Naive thymus-derived CD8-positive, alpha-beta T cell (primary cell): ENCODE measurements at regions of chr11 and their contacts with region 1.

Region 1: DNA sequence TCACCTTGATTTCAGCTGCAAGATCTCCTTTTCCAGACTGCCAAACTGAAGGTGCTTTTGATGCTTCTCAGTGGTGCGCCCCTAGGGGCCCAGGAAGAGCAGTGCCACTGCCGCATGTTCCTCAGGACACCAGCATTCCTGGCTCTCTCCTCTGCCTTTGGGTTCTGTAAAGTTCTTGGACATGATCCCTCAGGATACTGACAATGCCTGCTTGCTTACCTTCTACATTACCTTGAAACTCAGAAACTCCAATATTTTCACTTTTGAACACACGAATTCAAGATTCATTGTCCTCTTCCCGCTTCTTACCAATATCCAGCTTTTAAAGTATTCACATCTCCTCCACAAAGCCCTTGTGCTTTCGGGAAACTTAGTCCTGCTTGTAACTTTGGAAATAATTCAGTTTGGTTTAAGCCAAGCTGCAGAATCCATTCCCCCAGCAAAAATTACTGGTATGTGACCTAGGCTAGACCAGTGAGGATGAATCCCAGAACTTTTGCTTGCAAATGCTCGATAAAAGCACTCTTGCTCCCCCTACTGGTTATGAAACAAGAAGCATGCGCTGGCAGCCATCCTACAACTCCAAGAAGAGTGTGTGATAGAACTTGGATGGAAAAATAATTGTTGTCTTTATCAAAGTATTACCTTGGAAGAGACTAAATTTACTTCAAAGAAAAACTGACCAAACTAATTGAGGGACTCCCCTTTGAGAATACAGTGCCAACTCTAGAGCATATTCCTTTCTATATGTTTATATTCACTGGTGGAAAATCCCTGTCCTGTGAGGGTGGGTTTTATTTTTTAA is 16.5 kb upstream of the OR5B21 start:
- DNase-seq: peak in 9 of 10 donors; percentile 26 to 76 (median 66)
- ATAC-seq: peak; percentile 58 to 67
- H3K4me3 Mint-ChIP-seq: peak overlapping the region; percentile 49 to 86 (median 77)
- H3K27ac Mint-ChIP-seq: peak overlapping the region; percentile 91 to 98 (median 96)
- H3K4me1 Mint-ChIP-seq: peaks cover 33 to 80% (median 70%) of the 10 kb centered on the region in 4 donors
- H3K27me3 Mint-ChIP-seq: no peaks in the 10 kb centered on the region

Region 2: GRCh38 chr11:58276151-58276550 is 248.3 kb before region 1 on chr11:
- POLR2A ChIA-PET with region 1: no interaction called
- DNase-seq: no peak
- ATAC-seq: no peak
- H3K4me3 Mint-ChIP-seq: no peak overlapping the region
- H3K27ac Mint-ChIP-seq: no peak overlapping the region
- H3K4me1 Mint-ChIP-seq: no peaks in the 10 kb centered on the region
- H3K27me3 Mint-ChIP-seq: peaks cover 7 to 25% (median 13%) of the 10 kb centered on the region in 5 donors

Region 3: GRCh38 chr11:58446294-58446693 is 78.1 kb before region 1 on chr11:
- POLR2A ChIA-PET with region 1: no interaction called
- DNase-seq: no peak
- ATAC-seq: no peak
- H3K4me3 Mint-ChIP-seq: no peak overlapping the region
- H3K27ac Mint-ChIP-seq: no peak overlapping the region
- H3K4me1 Mint-ChIP-seq: peaks cover under 1 to 4% (median 2%) of the 10 kb centered on the region in 4 donors
- H3K27me3 Mint-ChIP-seq: peaks cover 0 to 10% (median 0%) of the 10 kb centered on the region in 5 donors

Region 4: DNA sequence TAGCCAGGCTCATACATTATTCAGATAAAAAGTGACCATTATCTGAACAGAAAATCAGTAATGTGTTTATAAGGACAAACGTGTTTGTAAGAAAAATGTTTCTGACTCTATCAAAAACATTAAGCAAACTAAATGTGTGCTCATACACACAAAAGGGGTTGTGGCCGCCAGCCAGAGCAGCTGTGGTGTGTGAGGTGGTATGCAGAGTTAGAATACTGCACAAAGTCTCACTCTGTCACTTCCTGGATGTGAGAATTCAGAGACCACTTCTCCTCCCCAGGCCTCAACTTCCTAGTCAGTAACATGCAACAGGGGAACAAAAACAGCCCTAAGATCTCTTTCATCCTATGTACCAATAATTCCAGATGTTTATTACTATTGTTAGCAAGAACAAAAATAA is 26.0 kb before region 1 on chr11:
- POLR2A ChIA-PET with region 1: interaction called, 10 read pairs
- DNase-seq: peak in 7 of 10 donors; percentile 11 to 62 (median 31)
- ATAC-seq: peak; percentile 84 to 93
- H3K4me3 Mint-ChIP-seq: peak overlapping the region in 9 of 10 donors; percentile 20 to 68 (median 55)
- H3K27ac Mint-ChIP-seq: peak overlapping the region; percentile 87 to 97 (median 92)
- H3K4me1 Mint-ChIP-seq: peaks cover 16 to 43% (median 37%) of the 10 kb centered on the region in 4 donors
- H3K27me3 Mint-ChIP-seq: no peaks in the 10 kb centered on the region

Region 5: DNA sequence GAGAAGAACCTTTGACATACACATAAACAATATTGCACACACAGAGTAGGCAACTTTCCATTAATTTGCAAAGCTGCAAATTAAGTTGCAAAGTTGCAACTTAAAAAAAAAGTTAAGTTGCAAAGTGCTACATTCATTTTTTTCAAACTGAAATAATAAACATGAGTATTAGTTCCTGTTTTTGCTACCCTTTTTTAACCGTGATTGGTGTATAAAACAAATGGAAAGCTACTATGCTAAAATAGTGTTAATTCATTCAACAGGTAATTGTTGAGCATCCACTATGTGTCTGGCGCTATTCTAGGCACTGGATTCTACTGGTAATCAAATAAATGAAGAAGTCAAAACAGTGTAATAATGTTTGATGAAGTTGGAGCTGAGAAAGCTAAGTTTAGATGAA is 62.6 kb after region 1 on chr11:
- POLR2A ChIA-PET with region 1: no interaction called
- DNase-seq: no peak
- ATAC-seq: no peak
- H3K4me3 Mint-ChIP-seq: peak overlapping the region in 1 of 10 donors; percentile 2
- H3K27ac Mint-ChIP-seq: peak overlapping the region in 2 of 10 donors; percentile 3 to 42
- H3K4me1 Mint-ChIP-seq: peaks cover 17 to 76% (median 58%) of the 10 kb centered on the region in 4 donors
- H3K27me3 Mint-ChIP-seq: no peaks in the 10 kb centered on the region